Aorta (tissue), 5 donors: ENCODE measurements at regions of chr10 and their contacts with region 1.

Region 1: DNA sequence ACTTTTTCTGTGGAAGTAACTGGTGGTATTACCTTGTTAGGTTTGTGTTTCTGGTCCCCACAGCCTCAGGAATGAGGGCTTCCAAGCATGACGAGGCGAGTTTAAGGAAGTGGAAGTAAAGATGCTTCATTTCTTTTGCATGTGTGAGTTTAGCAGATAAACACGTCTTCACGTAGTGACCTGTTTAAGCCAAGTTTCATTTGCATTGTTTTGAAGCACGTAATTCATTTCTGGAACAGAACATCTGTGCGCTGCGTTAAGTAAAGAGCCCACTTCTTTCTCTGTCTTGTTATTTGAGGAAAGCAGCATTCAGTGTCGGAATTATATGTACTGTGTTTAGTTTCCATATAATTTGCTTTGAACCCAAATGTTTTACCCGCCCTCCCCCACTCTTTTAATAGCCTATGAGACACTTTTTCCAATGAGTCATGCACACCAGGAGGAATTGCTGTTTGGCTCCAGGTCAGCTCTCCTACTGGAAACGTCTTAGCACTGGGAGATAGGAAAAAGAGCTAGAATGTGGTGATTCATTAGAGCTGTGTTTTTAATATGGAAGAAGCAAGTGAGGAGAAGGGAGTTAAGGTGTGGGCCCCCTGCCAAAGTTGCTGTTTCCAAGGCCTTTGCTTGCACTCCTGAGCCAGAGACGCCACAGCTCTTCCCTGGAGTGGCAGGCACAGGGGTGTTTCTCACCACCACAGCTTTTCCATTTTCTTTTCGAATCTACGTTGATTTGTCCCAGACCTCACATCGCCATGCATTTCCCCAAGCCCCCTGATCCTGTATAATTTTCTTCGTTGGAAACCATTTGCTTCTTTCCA is 36.8 kb downstream of the BTBD16 start:
- DNase-seq: peak; percentile 92 to 94
- ATAC-seq: peak; percentile 89
- H3K4me3 ChIP-seq: no peak overlapping the region
- H3K27ac ChIP-seq: peak overlapping the region; percentile 89 to 94
- H3K4me1 ChIP-seq: peaks cover 0 to 4% of the 10 kb centered on the region in 2 donors
- H3K27me3 ChIP-seq: no peaks in the 10 kb centered on the region

Region 2: GRCh38 chr10:122344741-122345258 is 36.9 kb after region 1 on chr10:
- intact Hi-C with region 1: no loop called
- DNase-seq: no peak
- ATAC-seq: no peak
- H3K4me3 ChIP-seq: no peak overlapping the region
- H3K27ac ChIP-seq: no peak overlapping the region
- H3K4me1 ChIP-seq: no peaks in the 10 kb centered on the region
- H3K27me3 ChIP-seq: no peaks in the 10 kb centered on the region

Region 3: DNA sequence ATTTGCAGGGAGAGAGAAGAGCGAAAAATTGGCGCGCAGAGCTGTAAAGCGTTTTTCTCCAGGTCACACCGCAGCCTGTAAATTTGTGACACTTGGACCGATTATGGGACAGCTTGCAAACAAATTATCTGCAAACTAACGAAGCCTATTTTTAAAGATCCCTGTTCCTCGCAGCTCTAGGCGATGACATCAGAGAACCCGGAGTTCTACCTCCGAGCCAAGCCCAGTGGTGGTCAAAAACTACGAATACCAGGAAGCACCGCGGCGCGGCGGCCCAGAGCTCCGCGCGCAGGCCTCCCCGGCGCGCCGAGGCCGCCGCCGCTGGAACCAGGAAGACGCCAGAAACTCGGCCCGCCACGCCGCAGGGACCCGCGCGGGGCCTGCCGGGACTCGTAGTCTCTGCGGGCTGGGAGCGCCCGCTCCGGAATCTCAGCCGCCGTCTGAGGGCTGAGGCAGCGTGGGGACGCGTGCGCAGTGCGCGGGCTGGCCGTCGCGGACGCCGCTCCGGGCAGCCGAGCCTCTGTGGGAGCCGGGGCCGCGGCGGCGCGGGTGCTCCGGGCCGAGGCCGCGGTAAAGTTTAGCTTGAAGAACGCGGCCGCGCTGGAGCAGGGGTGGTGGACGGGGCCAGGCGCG is 66.5 kb after region 1 on chr10 and contains the start of gene PLEKHA1:
- intact Hi-C with region 1: loop called in 1 of 2 experiments (anchors 5 kb)
- DNase-seq: peak; percentile 97 to 99
- ATAC-seq: peak; percentile 97
- H3K4me3 ChIP-seq: peak within 1 kb of the TSS; percentile 67 to 77
- H3K27ac ChIP-seq: peak within 1 kb of the TSS; percentile 65 to 89
- H3K4me1 ChIP-seq: no peaks in the 10 kb centered on the region
- H3K27me3 ChIP-seq: no peaks in the 10 kb centered on the region
- total RNA-seq, gene PLEKHA1: 39.8 to 46.1 TPM